ENCODE measurements at regions of chr12 and their contacts with region 1.

Region 1: DNA sequence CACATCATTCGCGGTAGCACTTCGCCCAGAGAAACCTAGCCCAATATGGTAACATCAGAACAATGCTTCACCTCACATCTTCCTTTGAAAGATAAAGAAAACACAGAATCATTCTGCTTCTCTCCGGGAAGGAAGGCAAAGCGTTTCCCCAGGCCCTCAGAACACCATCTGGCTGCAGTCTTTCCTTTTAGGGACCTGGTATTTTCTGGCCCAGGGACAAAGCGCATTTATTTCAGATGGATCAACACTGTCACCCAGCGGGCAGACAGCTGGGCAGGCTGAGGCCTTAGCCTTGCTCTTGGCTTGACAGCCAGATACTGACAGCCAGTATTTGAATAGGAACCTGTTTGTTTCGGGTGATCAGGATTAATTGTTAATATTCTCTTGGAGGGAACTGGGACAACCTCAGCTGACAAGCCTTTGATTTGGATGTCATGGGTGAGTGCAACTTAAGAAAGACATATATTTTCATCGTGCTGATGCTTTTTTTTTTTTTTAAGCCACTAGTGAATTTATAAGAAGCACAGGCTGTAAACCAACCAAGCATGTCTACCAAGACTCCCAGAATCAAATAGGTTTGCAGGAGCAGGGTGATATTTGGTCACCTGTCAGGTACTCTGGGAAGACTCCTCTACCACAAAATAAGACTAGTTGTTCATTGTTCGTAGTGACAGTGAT is 118.9 kb downstream of the VEZT start:
- DNase-seq: peak; percentile 86
- ATAC-seq: peak; percentile 92
- H3K4me3 ChIP-seq: peak overlapping the region; percentile 9 to 31 (median 16); a peak in 3 of 6 replicates
- H3K27ac ChIP-seq: no peak overlapping the region
- H3K4me1 ChIP-seq: peaks cover 63% of the 10 kb centered on the region
- H3K27me3 ChIP-seq: no peaks in the 10 kb centered on the region
- CTCF ChIP-seq: peak; percentile 98
- EP300 ChIP-seq: no peak
- POLR2A ChIP-seq: no peak
- RAD21 ChIP-seq: peak; percentile 96

Region 2: GRCh38 chr12:94603434-94604365 is 732.8 kb before region 1 on chr12:
- CTCF ChIA-PET with region 1: interaction called, 3 read pairs
- POLR2A ChIA-PET with region 1: no interaction called
- in situ Hi-C with region 1: no loop called
- intact Hi-C with region 1: loop called (anchors 5 kb)
- DNase-seq: peak; percentile 5
- ATAC-seq: peak; percentile 63
- H3K4me3 ChIP-seq: no peak overlapping the region
- H3K27ac ChIP-seq: no peak overlapping the region
- H3K4me1 ChIP-seq: no peaks in the 10 kb centered on the region
- H3K27me3 ChIP-seq: 0 out of 5 replicates have a peak, but pooled peaks cover 0 to 3% of the 10 kb centered on the region in 2 experiments
- CTCF ChIP-seq: peak; percentile 68
- EP300 ChIP-seq: no peak
- POLR2A ChIP-seq: no peak
- RAD21 ChIP-seq: peak; percentile 41

Region 3: GRCh38 chr12:95217377-95218149 is 119.0 kb before region 1 on chr12 and contains the starts of genes FGD6 and VEZT:
- CTCF ChIA-PET with region 1: no interaction called
- POLR2A ChIA-PET with region 1: no interaction called
- in situ Hi-C with region 1: loop called (anchors 10 kb)
- intact Hi-C with region 1: loop called (anchors 2 kb)
- DNase-seq: peak; percentile 98
- ATAC-seq: peak; percentile 94
- H3K4me3 ChIP-seq: peak within 1 kb of the TSS; percentile 84 to 95 (median 87)
- H3K27ac ChIP-seq: peak within 1 kb of the TSS; percentile 86
- H3K4me1 ChIP-seq: peaks cover 40% of the 10 kb centered on the region
- H3K27me3 ChIP-seq: no peaks in the 10 kb centered on the region; a peak in 1 of 5 replicates
- CTCF ChIP-seq: peak; percentile 82
- EP300 ChIP-seq: no peak
- POLR2A ChIP-seq: peak; percentile 78 to 79
- RAD21 ChIP-seq: peak; percentile 75
- total RNA-seq, gene FGD6: 4.3 and 5.3 TPM in 2 replicates
- total RNA-seq, gene VEZT: 29.3 and 35.5 TPM in 2 replicates

Region 4: DNA sequence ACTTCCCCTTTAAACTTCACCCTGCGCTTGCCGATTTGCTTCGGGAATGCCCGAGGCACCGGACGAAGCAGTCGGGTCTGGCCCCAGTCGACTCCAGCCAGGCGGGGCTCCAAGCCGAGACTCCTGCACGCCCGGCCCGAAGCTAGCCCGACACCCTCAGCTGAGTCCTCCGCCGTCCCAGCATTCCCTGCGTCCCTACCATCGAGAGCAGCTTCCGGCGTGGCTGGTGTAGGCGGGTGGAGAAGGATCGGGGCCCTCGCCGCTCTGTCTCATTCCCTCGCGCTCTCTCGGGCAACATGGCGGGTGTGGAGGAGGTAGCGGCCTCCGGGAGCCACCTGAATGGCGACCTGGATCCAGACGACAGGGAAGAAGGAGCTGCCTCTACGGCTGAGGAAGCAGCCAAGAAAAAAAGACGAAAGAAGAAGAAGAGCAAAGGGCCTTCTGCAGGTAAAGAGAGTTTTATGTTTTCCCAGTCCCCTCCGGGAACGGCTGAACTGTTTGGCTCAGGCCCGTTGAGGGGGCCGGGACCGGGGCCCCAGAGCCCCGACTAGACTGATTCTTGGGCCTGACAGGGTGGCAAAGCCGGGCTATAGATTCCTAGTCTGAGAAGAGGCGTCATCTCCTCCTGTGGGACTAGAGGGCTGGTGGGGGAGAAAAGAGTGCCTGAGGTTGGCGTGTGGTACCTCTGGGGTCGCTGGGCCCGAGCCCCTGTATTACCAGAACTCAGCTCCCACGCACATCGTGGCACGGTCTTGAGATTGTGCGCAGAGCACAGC is 137.5 kb after region 1 on chr12 and contains the start of gene METAP2:
- CTCF ChIA-PET with region 1: no interaction called
- POLR2A ChIA-PET with region 1: interaction called, 9 read pairs
- in situ Hi-C with region 1: no loop called
- intact Hi-C with region 1: loop called (anchors 5 kb)
- DNase-seq: peak; percentile 92
- ATAC-seq: peak; percentile 99
- H3K4me3 ChIP-seq: peak within 1 kb of the TSS; percentile 95 to 98 (median 95)
- H3K27ac ChIP-seq: peak within 1 kb of the TSS; percentile 86
- H3K4me1 ChIP-seq: peaks cover 38% of the 10 kb centered on the region
- H3K27me3 ChIP-seq: no peaks in the 10 kb centered on the region; a peak in 1 of 5 replicates
- CTCF ChIP-seq: peak; percentile 24; the same call in 1 of the 2 replicates
- EP300 ChIP-seq: no peak; a peak in 1 of 4 replicates
- POLR2A ChIP-seq: peak; percentile 94 to 95
- RAD21 ChIP-seq: 0 out of 2 replicates have a peak, but pooled peaks have one; percentile 38
- total RNA-seq, gene METAP2: 131 and 204 TPM in 2 replicates

Measured in HepG2 (cell line).